ENCODE measurements at regions of chr14 and their contacts with region 1.

Region 1: DNA sequence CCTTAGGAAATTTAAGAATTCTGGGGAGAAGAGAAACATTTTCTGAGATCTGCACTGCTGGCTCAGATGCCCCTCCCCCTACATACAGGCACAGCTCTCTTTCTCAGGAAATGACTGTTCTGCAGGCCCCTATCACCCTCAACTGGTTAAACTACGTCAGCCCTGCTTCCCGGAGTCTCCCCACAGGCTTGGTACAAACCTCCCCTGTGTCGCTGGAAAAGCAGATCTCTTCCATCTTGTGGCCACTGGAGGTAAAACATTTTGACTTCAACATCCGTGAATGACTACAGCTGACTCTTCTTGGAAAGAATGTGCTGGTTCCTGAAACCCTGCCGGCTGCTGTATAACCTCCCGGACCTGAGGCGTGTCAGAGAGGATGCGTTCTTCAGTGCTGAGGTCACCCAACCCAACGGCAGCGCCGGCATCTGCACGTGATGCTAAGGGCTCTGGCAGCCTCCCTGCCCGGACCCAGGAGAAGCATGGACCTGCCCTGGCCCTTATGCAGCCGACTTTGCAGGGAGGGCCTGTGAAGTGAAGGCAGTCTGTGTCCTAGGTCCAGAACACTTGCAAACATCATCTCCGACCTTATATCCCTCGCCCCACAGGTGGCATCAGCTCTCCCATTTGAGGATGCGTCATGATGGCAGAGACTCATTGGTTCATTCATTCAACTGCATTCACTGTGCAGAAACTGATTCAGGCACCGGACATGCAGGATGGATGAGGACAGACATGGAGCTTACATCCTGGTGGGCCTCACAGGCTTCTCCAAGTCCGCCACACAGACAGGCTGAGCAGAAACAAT is 129.3 kb downstream of the GCH1 start:
- DNase-seq: peak; percentile 100
- ATAC-seq: peak; percentile 90
- H3K4me3 ChIP-seq: peak overlapping the region; percentile 44
- H3K27ac ChIP-seq: peak overlapping the region; percentile 85
- H3K4me1 ChIP-seq: peaks cover 30% of the 10 kb centered on the region
- H3K27me3 ChIP-seq: no peaks in the 10 kb centered on the region
- CTCF ChIP-seq: peak; percentile 96

Region 2: GRCh38 chr14:54366736-54367735 is 406.3 kb before region 1 on chr14:
- CTCF ChIA-PET with region 1: interaction called, 4 read pairs
- POLR2A ChIA-PET with region 1: interaction called, 3 read pairs
- intact Hi-C with region 1: loop called (anchors 5 kb)
- DNase-seq: peak; percentile 88
- ATAC-seq: peak; percentile 71
- H3K4me3 ChIP-seq: no peak overlapping the region
- H3K27ac ChIP-seq: no peak overlapping the region
- H3K4me1 ChIP-seq: peaks cover 60% of the 10 kb centered on the region
- H3K27me3 ChIP-seq: no peaks in the 10 kb centered on the region
- CTCF ChIP-seq: peak; percentile 98

Region 3: DNA sequence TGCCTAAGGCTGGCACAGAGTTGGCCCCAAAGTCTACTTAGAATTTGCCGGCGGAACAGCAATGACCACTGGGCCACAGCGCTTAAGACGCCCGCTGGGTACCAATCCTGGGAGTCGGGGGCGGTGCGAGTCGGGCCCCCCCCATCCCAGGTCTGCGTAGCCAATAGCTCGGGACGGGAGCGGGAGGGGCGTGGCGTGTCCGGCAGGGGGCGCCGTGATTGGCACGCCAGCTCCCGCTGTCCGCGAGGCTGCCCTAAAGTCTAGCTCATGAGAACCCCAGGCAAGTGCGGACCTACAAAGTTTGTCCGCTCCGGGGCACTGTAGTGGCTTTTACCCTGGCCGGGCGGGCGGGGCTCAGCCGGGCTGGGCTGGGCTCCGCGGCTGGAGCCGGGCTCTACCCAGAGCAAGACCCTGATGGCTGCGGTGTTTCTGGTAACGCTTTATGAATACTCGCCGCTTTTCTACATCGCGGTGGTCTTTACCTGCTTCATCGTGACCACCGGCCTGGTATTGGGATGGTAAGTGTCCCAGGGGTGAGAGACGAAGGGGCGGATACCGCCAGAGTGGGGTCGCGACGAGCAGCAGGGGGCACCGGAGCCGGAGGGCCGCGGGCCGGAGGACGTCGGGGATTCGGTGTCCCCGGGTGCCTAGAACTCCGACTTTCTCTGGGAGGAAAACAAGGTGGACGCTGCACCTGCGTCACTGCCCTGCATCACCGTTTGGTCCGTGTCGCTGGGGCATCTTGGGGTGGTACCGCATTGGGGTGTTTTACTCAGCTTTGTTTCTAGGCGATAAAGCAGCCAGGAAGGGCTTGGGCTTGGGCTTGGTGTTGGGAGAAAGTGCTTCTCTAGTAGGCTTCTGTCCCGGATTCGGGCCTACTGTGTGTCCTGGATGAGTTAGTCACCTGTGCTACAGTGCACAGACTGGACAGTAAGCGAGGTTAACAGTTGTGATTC is 263.5 kb before region 1 on chr14 and contains the start of gene CGRRF1:
- CTCF ChIA-PET with region 1: interaction called, 15 read pairs
- POLR2A ChIA-PET with region 1: no interaction called
- intact Hi-C with region 1: loop called (anchors 1 kb)
- DNase-seq: peak; percentile 100
- ATAC-seq: peak; percentile 97
- H3K4me3 ChIP-seq: peak within 1 kb of the TSS; percentile 89
- H3K27ac ChIP-seq: no peak within 1 kb of the TSS
- H3K4me1 ChIP-seq: peaks cover 19% of the 10 kb centered on the region
- H3K27me3 ChIP-seq: no peaks in the 10 kb centered on the region
- CTCF ChIP-seq: peak; percentile 67
- total RNA-seq, gene CGRRF1: 31.3 and 31.5 TPM in 2 replicates

Region 4: GRCh38 chr14:54584097-54584496 is 189.3 kb before region 1 on chr14:
- CTCF ChIA-PET with region 1: no interaction called
- POLR2A ChIA-PET with region 1: no interaction called
- intact Hi-C with region 1: no loop called
- DNase-seq: no peak
- ATAC-seq: no peak
- H3K4me3 ChIP-seq: no peak overlapping the region
- H3K27ac ChIP-seq: no peak overlapping the region
- H3K4me1 ChIP-seq: peaks cover 5% of the 10 kb centered on the region
- H3K27me3 ChIP-seq: no peaks in the 10 kb centered on the region
- CTCF ChIP-seq: no peak

Region 5: GRCh38 chr14:54658836-54659764 is 114.3 kb before region 1 on chr14:
- CTCF ChIA-PET with region 1: no interaction called
- POLR2A ChIA-PET with region 1: no interaction called
- intact Hi-C with region 1: loop called (anchors 1 kb)
- DNase-seq: peak; percentile 100
- ATAC-seq: peak; percentile 93
- H3K4me3 ChIP-seq: peak overlapping the region; percentile 5; the same call in 1 of the 2 replicates
- H3K27ac ChIP-seq: peak overlapping the region; percentile 87
- H3K4me1 ChIP-seq: peaks cover 41% of the 10 kb centered on the region
- H3K27me3 ChIP-seq: no peaks in the 10 kb centered on the region
- CTCF ChIP-seq: no peak

Region 6: GRCh38 chr14:54691525-54692283 is 81.7 kb before region 1 on chr14:
- CTCF ChIA-PET with region 1: interaction called, 8 read pairs
- POLR2A ChIA-PET with region 1: interaction called, 9 read pairs
- intact Hi-C with region 1: loop called (anchors 1 kb)
- DNase-seq: peak; percentile 97
- ATAC-seq: peak; percentile 98
- H3K4me3 ChIP-seq: no peak overlapping the region
- H3K27ac ChIP-seq: peak overlapping the region; percentile 3; the same call in 1 of the 2 replicates
- H3K4me1 ChIP-seq: peaks cover 5% of the 10 kb centered on the region
- H3K27me3 ChIP-seq: no peaks in the 10 kb centered on the region
- CTCF ChIP-seq: peak; percentile 100

Region 7: DNA sequence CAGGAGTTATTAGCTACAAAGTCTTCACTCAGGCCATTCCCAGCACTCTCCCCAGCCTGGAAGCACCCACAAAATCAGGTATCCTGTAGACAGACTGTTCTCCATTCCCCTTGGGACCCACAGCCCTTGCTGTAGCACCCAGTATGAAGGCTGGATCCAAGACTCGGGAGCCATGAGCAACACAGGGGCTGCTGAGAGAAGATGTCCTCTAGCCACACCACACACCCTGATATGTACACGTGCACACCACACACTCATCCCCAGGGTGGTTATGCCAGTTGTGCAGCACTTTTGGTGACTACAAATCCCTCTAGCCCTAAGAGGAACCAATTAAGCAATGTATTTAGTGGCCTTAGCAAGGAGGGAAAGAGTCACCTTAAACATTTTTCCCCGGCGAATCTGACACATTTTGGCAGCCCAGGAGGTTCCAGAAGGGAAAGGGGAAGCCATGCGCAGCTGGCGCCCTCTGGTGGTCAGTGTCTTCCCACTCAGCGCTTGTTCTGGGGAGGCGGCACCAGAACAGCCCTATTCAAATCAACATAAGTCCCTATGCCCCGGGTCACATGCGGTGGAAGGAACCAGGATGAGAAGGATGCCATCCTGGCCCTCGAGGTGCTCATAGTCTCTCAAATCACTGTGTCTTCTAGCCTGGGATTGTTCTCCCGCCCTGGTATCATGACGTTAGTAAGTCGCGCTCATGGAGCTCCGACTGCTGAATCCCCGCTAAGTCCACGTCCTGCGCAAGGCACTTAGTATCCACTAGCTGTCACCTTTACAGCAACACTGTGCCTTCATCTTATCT is 32.3 kb after region 1 on chr14:
- CTCF ChIA-PET with region 1: interaction called, 6 read pairs
- POLR2A ChIA-PET with region 1: no interaction called
- intact Hi-C with region 1: loop called (anchors 1 kb)
- DNase-seq: peak; percentile 99
- ATAC-seq: peak; percentile 98
- H3K4me3 ChIP-seq: peak overlapping the region; percentile 42
- H3K27ac ChIP-seq: no peak overlapping the region
- H3K4me1 ChIP-seq: peaks cover 5% of the 10 kb centered on the region
- H3K27me3 ChIP-seq: no peaks in the 10 kb centered on the region
- CTCF ChIP-seq: peak; percentile 100

Region 8: DNA sequence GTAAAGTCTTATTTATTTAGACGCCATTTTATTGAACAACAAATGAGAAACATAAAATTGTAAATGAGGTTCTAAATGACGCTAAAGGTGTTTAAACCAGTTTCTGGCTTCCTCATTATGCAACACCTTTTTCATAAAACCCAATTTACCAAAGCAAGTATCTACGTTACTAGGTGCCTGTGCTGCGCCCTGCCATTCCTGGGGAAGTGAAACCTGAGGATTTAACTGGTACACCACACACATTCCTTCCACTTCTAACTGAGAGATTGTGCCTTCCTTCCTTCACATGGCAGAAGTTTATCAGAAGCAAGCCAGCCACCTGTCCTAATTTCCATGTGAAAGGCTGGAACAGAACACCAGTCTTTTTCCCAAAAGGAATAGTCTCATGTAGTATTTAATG is 169.5 kb after region 1 on chr14:
- CTCF ChIA-PET with region 1: no interaction called
- POLR2A ChIA-PET with region 1: no interaction called
- intact Hi-C with region 1: no loop called
- DNase-seq: no peak
- ATAC-seq: no peak
- H3K4me3 ChIP-seq: no peak overlapping the region
- H3K27ac ChIP-seq: no peak overlapping the region
- H3K4me1 ChIP-seq: no peaks in the 10 kb centered on the region
- H3K27me3 ChIP-seq: no peaks in the 10 kb centered on the region
- CTCF ChIP-seq: no peak

Measured in PC-3 (cell line).